ENCODE measurements at regions of chr2 and their contacts with region 1.

Region 1: GRCh38 chr2:741195-741496 is 63.9 kb upstream of the TMEM18 start:
- DNase-seq: no peak
- ATAC-seq: no peak
- H3K4me3 ChIP-seq: peak overlapping the region; percentile 48
- H3K27ac ChIP-seq: peak overlapping the region; percentile 76
- H3K4me1 ChIP-seq: peaks cover 10% of the 10 kb centered on the region; the same call in 2 of the 3 replicates
- CTCF ChIP-seq: no peak
- EP300 ChIP-seq: no peak
- POLR2A ChIP-seq: no peak
- RAD21 ChIP-seq: no peak

Region 2: DNA sequence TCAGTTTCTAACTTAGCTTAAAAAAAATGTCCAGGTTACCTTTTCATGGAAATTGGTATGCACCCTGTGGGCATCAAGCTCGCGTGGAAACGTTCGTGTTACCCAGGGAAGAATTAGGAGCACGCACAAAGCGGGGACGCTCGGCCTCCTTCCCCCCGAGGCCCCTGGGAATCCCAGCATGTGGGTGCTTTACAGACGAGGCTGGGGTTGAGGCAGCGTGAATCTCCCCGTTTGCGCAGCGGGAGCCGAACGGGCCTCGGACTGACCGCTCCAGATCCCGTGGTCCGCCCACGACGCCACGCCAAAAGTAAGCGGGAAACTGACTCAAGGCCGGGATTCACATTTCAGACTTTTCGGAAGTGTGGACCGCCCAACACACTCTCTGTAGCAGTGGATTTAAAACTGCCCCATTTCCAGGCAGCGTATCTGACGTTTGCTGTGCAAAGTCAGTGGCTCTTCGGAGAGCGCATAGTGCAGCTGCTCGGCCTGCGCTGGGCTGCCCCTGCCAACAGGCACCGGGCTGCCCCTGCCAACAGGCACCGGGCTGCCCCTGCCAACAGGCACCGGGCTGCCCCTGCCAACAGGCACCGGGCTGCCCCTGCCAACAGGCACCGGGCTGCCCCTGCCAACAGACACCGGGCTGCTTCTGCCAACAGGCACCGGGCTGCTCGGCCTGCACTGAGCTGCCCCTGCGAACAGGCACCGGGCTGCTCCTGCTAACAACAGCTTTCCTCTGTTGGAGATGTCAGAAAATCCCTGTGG is 527.0 kb before region 1 on chr2:
- CTCF ChIA-PET with region 1: no interaction called
- POLR2A ChIA-PET with region 1: no interaction called
- DNase-seq: no peak
- ATAC-seq: 0 out of 6 replicates have a peak, but pooled peaks of 1 of the 2 experiments have one; percentile 45
- H3K4me3 ChIP-seq: no peak overlapping the region
- H3K27ac ChIP-seq: no peak overlapping the region
- H3K4me1 ChIP-seq: no peaks in the 10 kb centered on the region
- CTCF ChIP-seq: no peak
- EP300 ChIP-seq: no peak
- POLR2A ChIP-seq: no peak
- RAD21 ChIP-seq: no peak

Region 3: DNA sequence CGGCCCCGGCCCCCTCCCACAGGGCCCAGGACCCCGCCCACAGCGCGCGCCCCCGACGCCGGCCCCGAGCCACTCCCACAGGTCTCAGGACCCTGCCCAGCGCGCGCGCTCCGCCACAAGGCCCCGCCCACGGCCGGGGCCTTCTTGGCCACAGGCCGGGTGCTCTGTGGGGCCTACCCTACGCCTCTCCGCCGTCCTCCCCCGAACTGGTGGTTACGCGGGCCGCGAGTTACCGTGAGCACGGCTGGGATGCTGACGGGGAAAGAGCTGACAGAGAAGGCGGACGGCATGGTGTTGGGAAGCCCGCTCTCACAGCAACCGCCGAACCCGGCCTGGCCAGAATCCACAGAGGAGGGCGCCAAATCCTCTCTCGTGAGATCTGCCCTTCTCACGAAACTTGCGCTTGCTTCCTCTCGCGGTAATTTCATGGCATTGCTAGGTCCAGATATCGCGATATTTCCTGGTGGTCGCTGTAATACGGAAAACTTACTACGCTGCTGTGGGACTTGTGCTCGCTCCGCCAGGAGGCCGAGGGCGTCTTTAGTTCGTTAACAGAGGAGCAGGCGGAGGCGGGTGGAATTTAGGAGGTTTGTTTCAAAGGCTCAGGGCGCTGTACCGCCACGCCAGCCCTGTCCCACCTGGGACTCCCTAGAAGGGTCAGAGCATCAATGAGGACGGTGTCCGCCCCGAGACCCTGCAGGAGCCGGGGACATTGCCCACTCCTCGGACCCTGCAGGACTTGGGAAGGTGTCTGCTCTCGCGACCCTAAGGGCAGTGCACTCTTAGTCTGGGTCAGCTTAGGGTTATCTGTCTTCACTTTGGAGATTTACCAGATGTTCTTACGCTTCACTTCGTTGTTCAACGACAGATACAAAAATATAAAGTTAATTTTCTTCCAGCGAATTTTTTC is 63.8 kb before region 1 on chr2 and contains the start of gene TMEM18:
- CTCF ChIA-PET with region 1: no interaction called
- POLR2A ChIA-PET with region 1: interaction called, 31 read pairs
- DNase-seq: peak; percentile 92 to 100
- ATAC-seq: peak; percentile 66 to 69
- H3K4me3 ChIP-seq: peak within 1 kb of the TSS; percentile 75
- H3K27ac ChIP-seq: peak within 1 kb of the TSS; percentile 90 to 92
- H3K4me1 ChIP-seq: peaks cover 23% of the 10 kb centered on the region
- CTCF ChIP-seq: peak; percentile 19; the same call in 1 of the 3 replicates
- EP300 ChIP-seq: no peak
- POLR2A ChIP-seq: peak; percentile 81
- RAD21 ChIP-seq: peak in 1 of 2 experiments; percentile 3; a peak in 2 of 5 replicates
- polyA plus RNA-seq, gene TMEM18: 52.0 and 75.0 TPM in 2 replicates

Measured in A549 (cell line).